ENCODE measurements at regions of chr17 and their contacts with region 1.

Region 1: DNA sequence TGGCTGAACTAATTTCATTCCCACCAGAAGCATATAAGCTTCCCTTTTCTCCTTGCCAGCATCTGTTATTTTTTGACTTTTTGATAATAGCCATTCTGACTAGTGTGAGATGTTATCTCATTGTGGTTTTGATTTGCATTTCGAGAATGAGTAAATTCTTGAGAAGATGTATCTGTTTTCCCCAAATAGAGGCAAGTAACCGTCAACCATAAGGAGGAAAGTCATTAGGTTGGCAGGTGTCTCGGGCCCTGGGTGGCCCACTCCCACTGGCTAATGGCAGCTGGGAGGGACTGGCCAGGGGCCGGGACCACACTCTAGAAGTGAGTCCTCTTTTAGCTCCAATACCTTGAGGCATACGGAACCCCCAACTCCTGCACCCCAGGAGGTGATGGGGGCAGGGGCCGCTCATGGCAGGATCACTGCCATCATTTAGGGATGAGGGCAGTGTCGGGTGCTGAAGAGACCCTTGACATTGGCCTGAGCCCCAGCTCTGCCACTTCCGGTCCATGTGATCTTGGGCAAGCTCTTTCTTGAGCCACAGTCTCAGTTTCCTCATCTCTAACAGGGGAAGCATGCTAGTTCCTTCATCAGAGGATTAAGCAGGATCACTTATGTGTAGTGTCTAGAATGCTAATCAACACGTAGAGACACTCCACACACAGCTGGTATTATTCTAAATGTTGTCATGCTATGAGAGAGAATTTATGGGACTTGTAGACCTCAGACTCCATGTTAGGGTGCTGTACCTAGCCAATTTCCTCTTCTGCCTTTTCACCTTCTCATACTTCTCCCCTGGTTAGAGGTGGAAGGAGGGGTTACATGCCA is 44.3 kb downstream of the RGS9 start:
- DNase-seq: peak; percentile 82
- H3K4me3 Mint-ChIP-seq: peak overlapping the region; percentile 16
- H3K27ac Mint-ChIP-seq: peak overlapping the region; percentile 90
- H3K4me1 Mint-ChIP-seq: peaks cover 68% of the 10 kb centered on the region
- H3K27me3 Mint-ChIP-seq: no peaks in the 10 kb centered on the region

Region 2: GRCh38 chr17:65027305-65027704 is 154.1 kb before region 1 on chr17:
- CTCF ChIA-PET with region 1: no interaction called
- POLR2A ChIA-PET with region 1: no interaction called
- intact Hi-C with region 1: loop called (anchors 2 kb)
- DNase-seq: peak; percentile 75
- H3K4me3 Mint-ChIP-seq: peak overlapping the region; percentile 62
- H3K27ac Mint-ChIP-seq: peak overlapping the region; percentile 96
- H3K4me1 Mint-ChIP-seq: peaks cover 83% of the 10 kb centered on the region
- H3K27me3 Mint-ChIP-seq: no peaks in the 10 kb centered on the region

Region 3: DNA sequence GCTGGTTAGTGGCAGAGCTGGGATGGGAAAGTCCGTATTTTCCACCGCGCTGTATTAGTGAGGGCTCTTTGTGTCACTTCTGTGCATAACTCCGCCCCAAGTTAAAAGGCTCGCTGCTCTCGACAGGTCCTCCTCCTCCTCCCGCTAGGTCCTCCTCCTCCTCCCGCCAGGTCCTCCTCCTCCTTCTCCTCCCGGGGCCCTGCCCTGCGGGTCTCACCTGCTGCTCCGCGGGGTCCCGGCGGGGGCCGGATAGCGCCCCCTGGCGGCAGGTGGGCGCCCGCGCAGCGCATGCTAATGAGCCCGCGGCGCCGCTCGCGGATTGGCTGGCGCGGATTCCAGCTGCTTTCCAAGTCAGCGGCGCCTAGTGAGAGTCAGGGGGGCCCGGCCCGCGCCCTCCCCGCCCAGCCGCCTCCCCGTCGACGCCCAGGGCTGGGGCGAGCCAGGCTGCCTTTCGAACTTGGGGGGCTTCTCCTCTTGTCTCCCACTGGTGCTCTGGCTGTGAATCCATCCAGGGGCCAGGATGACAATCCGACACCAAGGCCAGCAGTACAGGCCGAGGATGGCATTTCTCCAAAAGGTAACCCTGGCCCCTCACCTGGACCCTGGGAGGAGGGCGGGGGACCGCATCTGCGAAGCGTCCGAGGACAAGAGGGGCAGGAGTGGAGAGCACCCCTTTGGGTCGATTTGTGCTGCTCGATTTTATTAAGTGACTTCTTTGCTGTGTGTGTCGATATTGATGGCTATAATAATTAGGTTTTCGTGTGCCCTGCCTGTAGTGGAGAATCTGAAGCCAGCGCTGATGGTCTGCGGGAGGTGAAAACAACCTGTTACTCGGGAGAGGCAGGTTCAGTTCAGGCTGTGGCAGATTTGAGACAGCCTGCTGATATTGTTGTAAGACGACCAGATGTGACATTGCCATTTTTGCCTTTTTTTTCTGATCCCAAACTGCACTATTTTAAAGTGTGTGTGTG is 44.1 kb before region 1 on chr17 and contains the start of gene RGS9:
- CTCF ChIA-PET with region 1: interaction called, 30 read pairs
- POLR2A ChIA-PET with region 1: interaction called, 5 read pairs
- intact Hi-C with region 1: loop called (anchors 2 kb)
- DNase-seq: peak; percentile 89
- H3K4me3 Mint-ChIP-seq: peak within 1 kb of the TSS; percentile 72
- H3K27ac Mint-ChIP-seq: no peak within 1 kb of the TSS
- H3K4me1 Mint-ChIP-seq: peaks cover 27% of the 10 kb centered on the region
- H3K27me3 Mint-ChIP-seq: peaks cover 11% of the 10 kb centered on the region
- total RNA-seq, gene RGS9: 6.4 to 8.7 TPM

Region 4: DNA sequence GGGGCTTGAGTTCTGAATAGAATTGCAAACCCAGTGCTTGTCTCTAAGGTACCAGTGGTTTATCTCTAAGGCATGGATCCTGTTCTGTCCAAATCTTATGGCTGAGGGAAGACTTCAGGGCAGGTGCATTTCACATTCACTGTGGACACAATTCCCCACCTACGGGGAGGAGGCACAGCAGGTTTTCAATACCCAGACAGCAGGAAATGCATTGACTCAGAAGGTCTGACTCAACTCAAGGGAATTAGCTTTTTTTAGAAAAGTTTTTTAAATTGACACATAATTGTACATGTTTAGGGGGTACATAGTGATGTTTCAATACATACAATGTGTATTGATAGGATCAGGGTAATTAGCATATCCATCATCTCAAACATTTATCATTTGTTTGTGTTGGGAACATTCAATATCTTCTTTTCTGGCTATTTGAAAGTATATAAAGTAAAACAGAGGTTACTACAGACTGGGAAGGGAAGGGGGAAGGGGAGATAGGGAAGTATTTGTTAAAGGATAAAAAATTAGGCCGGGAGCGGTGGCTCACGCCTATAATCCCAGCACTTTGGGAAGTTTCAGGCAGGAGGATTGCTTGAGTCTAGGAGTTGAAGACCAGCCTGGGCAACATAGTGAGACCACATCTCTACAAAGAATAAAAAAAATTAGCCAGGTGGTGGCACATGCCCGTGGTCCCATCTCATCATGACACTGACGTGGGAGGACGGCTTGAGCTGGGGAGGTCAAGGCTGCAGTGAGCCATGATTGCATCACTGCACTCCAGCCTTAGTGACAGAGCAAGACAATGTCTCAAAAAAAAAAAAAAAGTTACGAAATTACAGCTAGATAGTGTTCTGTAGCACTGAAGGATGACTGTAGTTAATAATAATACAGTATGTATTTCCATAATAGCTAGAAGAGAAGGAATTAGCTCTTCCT is 10.6 kb after region 1 on chr17:
- CTCF ChIA-PET with region 1: interaction called, 23 read pairs
- POLR2A ChIA-PET with region 1: no interaction called
- intact Hi-C with region 1: loop called (anchors 1 kb)
- DNase-seq: peak; percentile 51
- H3K4me3 Mint-ChIP-seq: no peak overlapping the region
- H3K27ac Mint-ChIP-seq: peak overlapping the region; percentile 49
- H3K4me1 Mint-ChIP-seq: peaks cover 40% of the 10 kb centered on the region
- H3K27me3 Mint-ChIP-seq: no peaks in the 10 kb centered on the region

Region 5: GRCh38 chr17:65261682-65262636 is 80.5 kb after region 1 on chr17:
- CTCF ChIA-PET with region 1: no interaction called
- POLR2A ChIA-PET with region 1: no interaction called
- intact Hi-C with region 1: no loop called
- DNase-seq: no peak
- H3K4me3 Mint-ChIP-seq: no peak overlapping the region
- H3K27ac Mint-ChIP-seq: peak overlapping the region; percentile 15
- H3K4me1 Mint-ChIP-seq: peaks cover 23% of the 10 kb centered on the region
- H3K27me3 Mint-ChIP-seq: peaks cover 3% of the 10 kb centered on the region

Region 6: DNA sequence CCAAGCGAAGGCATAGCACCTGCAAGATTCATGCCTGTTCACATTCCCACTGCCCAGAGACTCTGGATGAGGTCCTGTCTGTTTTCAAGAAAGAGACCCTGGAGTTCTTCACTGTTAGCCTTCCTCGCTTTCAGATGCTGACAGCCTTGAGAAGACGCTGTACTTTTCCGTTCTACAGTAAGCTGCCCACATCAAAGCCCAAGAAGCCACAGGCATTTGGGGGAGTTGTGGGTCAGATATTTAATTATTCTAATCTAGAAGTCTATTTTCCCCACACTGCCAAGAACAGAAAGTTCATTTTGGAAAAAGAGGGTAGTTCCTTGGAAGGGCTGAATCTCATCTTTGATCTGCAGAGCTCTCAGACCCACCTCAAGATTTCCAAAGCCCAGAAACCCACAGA is 252.1 kb after region 1 on chr17:
- CTCF ChIA-PET with region 1: no interaction called
- POLR2A ChIA-PET with region 1: no interaction called
- intact Hi-C with region 1: no loop called
- DNase-seq: no peak
- H3K4me3 Mint-ChIP-seq: no peak overlapping the region
- H3K27ac Mint-ChIP-seq: no peak overlapping the region
- H3K4me1 Mint-ChIP-seq: peaks cover 18% of the 10 kb centered on the region
- H3K27me3 Mint-ChIP-seq: peaks cover 6% of the 10 kb centered on the region

Measured in activated CD4-positive, alpha-beta memory T cell treated with anti-CD3 and anti-CD28 coated beads for 36 hours (primary cell).